CD8-positive, alpha-beta T cell (primary cell): ENCODE measurements at regions of chr10 and their contacts with region 1.

Region 1: DNA sequence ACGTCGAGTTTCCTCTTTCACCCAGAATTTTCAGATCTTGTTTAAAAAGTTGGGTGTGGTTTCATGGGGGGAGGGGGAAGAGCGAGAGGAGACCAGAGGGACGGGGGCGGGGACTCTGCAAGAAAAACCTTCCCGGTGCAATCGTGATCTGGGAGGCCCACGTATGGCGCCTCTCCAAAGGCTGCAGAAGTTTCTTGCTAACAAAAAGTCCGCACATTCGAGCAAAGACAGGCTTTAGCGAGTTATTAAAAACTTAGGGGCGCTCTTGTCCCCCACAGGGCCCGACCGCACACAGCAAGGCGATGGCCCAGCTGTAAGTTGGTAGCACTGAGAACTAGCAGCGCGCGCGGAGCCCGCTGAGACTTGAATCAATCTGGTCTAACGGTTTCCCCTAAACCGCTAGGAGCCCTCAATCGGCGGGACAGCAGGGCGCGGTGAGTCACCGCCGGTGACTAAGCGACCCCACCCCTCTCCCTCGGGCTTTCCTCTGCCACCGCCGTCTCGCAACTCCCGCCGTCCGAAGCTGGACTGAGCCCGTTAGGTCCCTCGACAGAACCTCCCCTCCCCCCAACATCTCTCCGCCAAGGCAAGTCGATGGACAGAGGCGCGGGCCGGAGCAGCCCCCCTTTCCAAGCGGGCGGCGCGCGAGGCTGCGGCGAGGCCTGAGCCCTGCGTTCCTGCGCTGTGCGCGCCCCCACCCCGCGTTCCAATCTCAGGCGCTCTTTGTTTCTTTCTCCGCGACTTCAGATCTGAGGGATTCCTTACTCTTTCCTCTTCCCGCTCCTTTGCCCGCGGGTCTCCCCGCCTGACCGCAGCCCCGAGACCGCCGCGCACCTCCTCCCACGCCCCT is at the start of gene VIM:
- DNase-seq: peak; percentile 65 to 93 (median 88)
- ATAC-seq: peak; percentile 26
- H3K4me3 ChIP-seq: peak within 1 kb of the TSS; percentile 76 to 82
- H3K4me3 Mint-ChIP-seq: peak within 1 kb of the TSS; percentile 99
- H3K27ac ChIP-seq: peak within 1 kb of the TSS; percentile 92 to 98
- H3K27ac Mint-ChIP-seq: peak within 1 kb of the TSS; percentile 100
- H3K4me1 ChIP-seq: peaks cover 41% of the 10 kb centered on the region
- H3K4me1 Mint-ChIP-seq: peaks cover 50% of the 10 kb centered on the region
- H3K27me3 ChIP-seq: no peaks in the 10 kb centered on the region
- H3K27me3 Mint-ChIP-seq: no peaks in the 10 kb centered on the region
- CTCF ChIP-seq: no peak
- total RNA-seq, gene VIM: 776 to 783 TPM

Region 2: GRCh38 chr10:15859906-15860691 is 1368.2 kb before region 1 on chr10 and contains the start of gene MINDY3:
- CTCF ChIA-PET with region 1: no interaction called
- POLR2A ChIA-PET with region 1: interaction called, 5 read pairs
- intact Hi-C with region 1: loop called in 1 of 2 experiments (anchors 10 kb)
- DNase-seq: peak; percentile 70 to 93 (median 85)
- ATAC-seq: peak; percentile 89
- H3K4me3 ChIP-seq: peak within 1 kb of the TSS; percentile 91 to 96
- H3K4me3 Mint-ChIP-seq: peak within 1 kb of the TSS; percentile 100
- H3K27ac ChIP-seq: peak within 1 kb of the TSS; percentile 62 to 63
- H3K27ac Mint-ChIP-seq: peak within 1 kb of the TSS; percentile 96
- H3K4me1 ChIP-seq: peaks cover 23% of the 10 kb centered on the region
- H3K4me1 Mint-ChIP-seq: peaks cover 43% of the 10 kb centered on the region
- H3K27me3 ChIP-seq: peaks cover 0 to 2% of the 10 kb centered on the region in 2 experiments
- H3K27me3 Mint-ChIP-seq: peaks cover 13% of the 10 kb centered on the region
- CTCF ChIP-seq: no peak
- total RNA-seq, gene MINDY3: 34.0 to 34.6 TPM

Region 3: GRCh38 chr10:16891375-16892313 is 336.7 kb before region 1 on chr10:
- CTCF ChIA-PET with region 1: interaction called, 4 read pairs
- POLR2A ChIA-PET with region 1: no interaction called
- intact Hi-C with region 1: loop called in 1 of 2 experiments (anchors 1 kb)
- DNase-seq: peak in 7 of 9 experiments; percentile 9 to 63 (median 34)
- ATAC-seq: peak; percentile 67
- H3K4me3 ChIP-seq: no peak overlapping the region
- H3K4me3 Mint-ChIP-seq: peak overlapping the region; percentile 77
- H3K27ac ChIP-seq: no peak overlapping the region
- H3K27ac Mint-ChIP-seq: peak overlapping the region; percentile 58
- H3K4me1 ChIP-seq: no peaks in the 10 kb centered on the region
- H3K4me1 Mint-ChIP-seq: peaks cover 9% of the 10 kb centered on the region
- H3K27me3 ChIP-seq: no peaks in the 10 kb centered on the region
- H3K27me3 Mint-ChIP-seq: no peaks in the 10 kb centered on the region
- CTCF ChIP-seq: peak; percentile 21

Region 4: DNA sequence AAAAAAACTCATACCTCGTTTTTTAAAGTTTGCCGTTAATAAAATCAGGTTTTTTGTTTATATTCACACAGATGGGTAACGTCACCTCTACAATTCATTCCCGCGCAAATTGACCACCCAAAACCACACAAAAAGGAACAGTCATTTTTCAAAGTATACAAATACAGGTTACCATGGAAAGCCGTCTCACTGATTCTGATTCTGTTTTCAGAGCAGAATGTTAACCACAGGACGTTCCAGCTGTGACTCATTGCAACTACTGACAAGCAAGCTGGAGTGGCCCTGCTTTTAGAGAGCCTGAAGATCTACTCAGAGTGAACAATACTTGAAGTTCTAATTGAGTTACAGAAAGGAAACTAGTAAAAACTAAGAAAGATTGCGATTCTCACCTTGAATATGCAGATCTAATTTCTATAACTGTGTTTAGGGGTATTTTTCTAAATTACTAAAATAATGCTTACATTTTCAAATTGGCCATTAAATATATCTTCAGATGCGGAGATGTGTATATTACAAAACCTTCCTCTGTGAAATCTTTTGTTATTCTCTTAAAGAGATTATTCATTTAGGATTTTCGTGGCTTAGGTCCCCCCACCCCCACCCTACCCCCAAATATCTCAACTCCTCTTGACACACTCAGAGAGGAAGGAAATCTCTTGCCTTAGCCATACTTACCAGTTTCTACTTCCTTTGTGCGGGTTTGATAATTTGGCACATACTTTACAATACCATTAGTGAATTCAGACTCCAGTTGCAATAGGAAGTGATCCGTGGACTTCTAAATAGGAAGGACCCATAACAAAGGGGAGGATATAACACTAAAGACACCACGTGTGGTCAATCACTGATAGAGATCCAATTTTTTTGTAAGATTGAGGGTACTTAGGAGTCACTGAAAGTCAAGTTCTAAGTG is 204.7 kb before region 1 on chr10:
- CTCF ChIA-PET with region 1: interaction called, 3 read pairs
- POLR2A ChIA-PET with region 1: interaction called, 5 read pairs
- intact Hi-C with region 1: loop called (anchors 1 to 2 kb)
- DNase-seq: peak; percentile 48 to 96 (median 72)
- ATAC-seq: peak; percentile 67
- H3K4me3 ChIP-seq: peak overlapping the region; percentile 16 to 44
- H3K4me3 Mint-ChIP-seq: peak overlapping the region; percentile 53
- H3K27ac ChIP-seq: peak overlapping the region; percentile 78 to 91
- H3K27ac Mint-ChIP-seq: peak overlapping the region; percentile 95
- H3K4me1 ChIP-seq: peaks cover 68% of the 10 kb centered on the region
- H3K4me1 Mint-ChIP-seq: peaks cover 65% of the 10 kb centered on the region
- H3K27me3 ChIP-seq: no peaks in the 10 kb centered on the region
- H3K27me3 Mint-ChIP-seq: no peaks in the 10 kb centered on the region
- CTCF ChIP-seq: no peak

Region 5: DNA sequence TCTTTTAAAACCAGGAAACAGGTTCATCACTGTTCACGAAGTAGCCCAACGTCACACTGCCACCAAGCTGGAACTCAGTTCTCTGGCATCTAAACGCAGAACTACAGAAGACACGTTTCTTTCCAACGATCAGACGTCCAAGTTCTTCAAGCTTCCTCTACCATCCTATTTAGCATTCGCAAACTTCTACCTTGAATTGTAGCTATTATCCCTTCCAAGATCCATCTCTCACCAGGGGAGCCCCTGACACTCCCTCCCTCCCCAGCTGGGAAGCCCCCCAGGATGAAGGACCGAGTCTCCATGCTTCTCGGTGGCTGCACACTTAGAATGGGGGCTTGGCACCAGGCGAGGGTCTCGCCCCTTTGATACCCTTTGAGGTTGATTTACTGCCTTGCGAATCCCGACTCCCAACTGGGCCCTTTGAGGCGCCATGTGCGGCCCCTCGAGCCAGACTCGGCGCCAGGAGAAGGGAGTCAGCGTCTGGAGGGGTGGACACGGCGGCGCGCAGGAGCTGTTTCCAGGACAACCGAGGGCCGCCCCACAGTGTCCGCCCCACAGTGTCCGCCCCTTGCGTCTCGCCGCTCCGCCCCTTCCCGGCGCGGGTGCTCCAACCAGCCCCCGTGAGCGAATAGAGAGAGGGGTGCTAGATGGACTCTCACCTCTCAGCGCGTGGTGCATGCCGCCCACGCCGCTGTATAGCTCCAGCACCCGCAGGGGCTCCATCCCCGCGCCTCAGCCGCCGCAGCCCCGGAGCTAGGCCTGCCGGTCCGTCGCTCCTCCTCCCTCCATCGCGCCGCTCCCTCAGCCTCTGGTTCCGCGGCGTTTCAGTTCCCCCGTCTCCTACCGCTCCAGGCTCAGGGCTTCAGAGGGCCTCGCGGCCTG is 27.2 kb before region 1 on chr10 and contains the start of gene TRDMT1:
- CTCF ChIA-PET with region 1: interaction called, 22 read pairs
- POLR2A ChIA-PET with region 1: interaction called, 111 read pairs
- intact Hi-C with region 1: loop called (anchors 1 kb)
- DNase-seq: peak; percentile 66 to 87 (median 76)
- ATAC-seq: peak; percentile 77
- H3K4me3 ChIP-seq: peak within 1 kb of the TSS; percentile 69 to 83
- H3K4me3 Mint-ChIP-seq: peak within 1 kb of the TSS; percentile 98
- H3K27ac ChIP-seq: peak within 1 kb of the TSS; percentile 80 to 92
- H3K27ac Mint-ChIP-seq: peak within 1 kb of the TSS; percentile 97
- H3K4me1 ChIP-seq: peaks cover 21% of the 10 kb centered on the region
- H3K4me1 Mint-ChIP-seq: peaks cover 35% of the 10 kb centered on the region
- H3K27me3 ChIP-seq: no peaks in the 10 kb centered on the region
- H3K27me3 Mint-ChIP-seq: no peaks in the 10 kb centered on the region
- CTCF ChIP-seq: no peak
- total RNA-seq, gene TRDMT1: 10.4 to 11.7 TPM

Region 6: GRCh38 chr10:17240616-17241015 is 12.3 kb after region 1 on chr10:
- CTCF ChIA-PET with region 1: interaction called, 3 read pairs
- POLR2A ChIA-PET with region 1: interaction called, 11 read pairs
- intact Hi-C with region 1: no loop called
- DNase-seq: no peak
- ATAC-seq: no peak
- H3K4me3 ChIP-seq: no peak overlapping the region
- H3K4me3 Mint-ChIP-seq: no peak overlapping the region
- H3K27ac ChIP-seq: no peak overlapping the region
- H3K27ac Mint-ChIP-seq: no peak overlapping the region
- H3K4me1 ChIP-seq: peaks cover 9% of the 10 kb centered on the region
- H3K4me1 Mint-ChIP-seq: peaks cover 14% of the 10 kb centered on the region
- H3K27me3 ChIP-seq: no peaks in the 10 kb centered on the region
- H3K27me3 Mint-ChIP-seq: no peaks in the 10 kb centered on the region
- CTCF ChIP-seq: no peak